B cell (primary cell): ENCODE measurements at regions of chrX and their contacts with region 1.

Region 1: DNA sequence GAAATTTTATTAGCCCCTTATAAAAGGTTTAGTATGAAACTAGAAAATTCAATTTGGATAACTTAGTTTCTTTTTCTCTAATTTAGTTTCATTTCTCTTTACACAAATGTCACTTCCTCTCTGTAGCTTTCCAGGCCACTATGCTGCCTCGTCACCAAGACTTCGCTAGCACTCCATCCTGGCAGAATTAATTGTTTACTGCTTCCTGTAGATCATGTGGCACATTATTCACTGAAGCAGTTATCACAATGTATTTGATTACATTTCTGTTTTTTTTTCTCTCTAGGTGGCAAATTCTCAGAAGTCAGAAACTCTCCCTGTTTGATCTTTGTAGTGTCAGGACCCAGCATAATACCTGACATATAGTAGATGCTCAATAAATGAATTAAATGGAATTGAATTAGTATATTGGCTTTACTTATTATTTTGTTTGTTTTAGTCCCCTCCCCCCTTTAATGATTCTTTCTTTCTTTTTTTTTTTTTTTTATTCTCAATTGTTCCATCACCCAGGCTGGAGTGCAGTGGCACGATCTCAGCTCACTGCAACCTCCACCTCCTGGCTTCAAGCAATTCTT is 9.3 kb upstream of the SAT1 start:
- DNase-seq: peak; percentile 83
- ATAC-seq: peak; percentile 92
- H3K4me3 ChIP-seq: peak overlapping the region in 1 of 5 experiments; percentile 33
- H3K4me3 Mint-ChIP-seq: peak overlapping the region; percentile 71
- H3K27ac ChIP-seq: peak overlapping the region; percentile 85 to 89
- H3K27ac Mint-ChIP-seq: peak overlapping the region; percentile 89
- H3K4me1 ChIP-seq: peaks cover 16 to 27% of the 10 kb centered on the region in 2 donors
- H3K4me1 Mint-ChIP-seq: peaks cover 16% of the 10 kb centered on the region
- H3K27me3 ChIP-seq: no peaks in the 10 kb centered on the region
- H3K27me3 Mint-ChIP-seq: no peaks in the 10 kb centered on the region
- CTCF ChIP-seq: no peak

Region 2: GRCh38 chrX:23656684-23657083 is 117.0 kb before region 1 on chrX:
- CTCF ChIA-PET with region 1: no interaction called
- POLR2A ChIA-PET with region 1: no interaction called
- intact Hi-C with region 1: no loop called
- DNase-seq: no peak
- ATAC-seq: no peak
- H3K4me3 ChIP-seq: no peak overlapping the region
- H3K4me3 Mint-ChIP-seq: no peak overlapping the region
- H3K27ac ChIP-seq: no peak overlapping the region
- H3K27ac Mint-ChIP-seq: no peak overlapping the region
- H3K4me1 ChIP-seq: no peaks in the 10 kb centered on the region
- H3K4me1 Mint-ChIP-seq: peaks cover 17% of the 10 kb centered on the region
- H3K27me3 ChIP-seq: peaks cover 0 to 4% (median 0%) of the 10 kb centered on the region in 4 experiments
- H3K27me3 Mint-ChIP-seq: no peaks in the 10 kb centered on the region
- CTCF ChIP-seq: no peak

Region 3: GRCh38 chrX:24553011-24553410 is 779.3 kb after region 1 on chrX:
- CTCF ChIA-PET with region 1: no interaction called
- POLR2A ChIA-PET with region 1: interaction called, 11 read pairs
- intact Hi-C with region 1: no loop called
- DNase-seq: no peak
- ATAC-seq: no peak
- H3K4me3 ChIP-seq: no peak overlapping the region
- H3K4me3 Mint-ChIP-seq: no peak overlapping the region
- H3K27ac ChIP-seq: no peak overlapping the region
- H3K27ac Mint-ChIP-seq: no peak overlapping the region
- H3K4me1 ChIP-seq: no peaks in the 10 kb centered on the region
- H3K4me1 Mint-ChIP-seq: peaks cover 1% of the 10 kb centered on the region
- H3K27me3 ChIP-seq: no peaks in the 10 kb centered on the region
- H3K27me3 Mint-ChIP-seq: no peaks in the 10 kb centered on the region
- CTCF ChIP-seq: no peak